ENCODE measurements at regions of chr7 and their contacts with region 1.

Region 1: DNA sequence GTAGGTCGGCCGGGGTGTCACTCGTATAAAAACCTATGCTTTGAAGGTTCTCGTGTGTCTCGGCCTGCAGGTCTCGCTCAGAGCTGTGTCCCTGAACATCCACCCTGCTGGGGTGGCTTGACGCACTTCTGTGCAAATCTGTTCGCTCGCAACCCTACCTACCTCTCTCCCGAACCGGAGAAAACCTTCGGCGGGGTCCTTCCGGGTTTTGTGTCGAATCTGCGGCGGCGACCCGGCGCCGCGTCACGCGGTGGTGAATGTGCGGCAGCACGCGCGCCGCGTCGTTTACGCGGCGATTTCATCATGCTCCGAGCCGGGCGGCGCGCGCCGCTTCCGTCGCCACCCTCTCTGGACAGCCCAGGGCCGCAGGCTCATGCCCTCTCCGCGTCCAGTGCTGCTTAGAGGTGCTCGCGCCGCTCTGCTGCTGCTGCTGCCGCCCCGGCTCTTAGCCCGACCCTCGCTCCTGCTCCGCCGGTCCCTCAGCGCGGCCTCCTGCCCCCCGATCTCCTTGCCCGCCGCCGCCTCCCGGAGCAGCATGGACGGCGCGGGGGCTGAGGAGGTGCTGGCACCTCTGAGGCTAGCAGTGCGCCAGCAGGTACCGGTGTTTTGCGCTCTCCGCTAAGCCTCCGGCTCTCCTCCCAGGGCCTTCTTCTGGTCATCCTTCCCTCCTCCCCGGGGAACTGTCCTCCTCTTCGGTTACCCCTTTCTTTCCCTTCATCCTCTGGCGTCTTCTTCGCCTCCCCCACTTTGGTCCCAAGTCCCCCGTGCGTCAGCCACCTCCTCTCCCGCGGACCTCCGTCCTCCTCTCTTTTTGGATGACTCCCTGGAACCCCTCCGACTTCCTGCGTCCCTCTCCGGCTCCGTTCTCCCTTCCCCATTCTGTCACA is at the start of gene GARS1:
- DNase-seq: peak; percentile 92
- ATAC-seq: peak; percentile 89
- H3K4me3 ChIP-seq: peak within 1 kb of the TSS; percentile 72
- H3K27ac ChIP-seq: peak within 1 kb of the TSS; percentile 90
- H3K4me1 ChIP-seq: peaks cover 5% of the 10 kb centered on the region
- H3K27me3 ChIP-seq: no peaks in the 10 kb centered on the region
- CTCF ChIP-seq: no peak
- POLR2A ChIP-seq: peak; percentile 94
- RAD21 ChIP-seq: no peak
- total RNA-seq, gene GARS1: 105 and 209 TPM in 2 replicates

Region 2: DNA sequence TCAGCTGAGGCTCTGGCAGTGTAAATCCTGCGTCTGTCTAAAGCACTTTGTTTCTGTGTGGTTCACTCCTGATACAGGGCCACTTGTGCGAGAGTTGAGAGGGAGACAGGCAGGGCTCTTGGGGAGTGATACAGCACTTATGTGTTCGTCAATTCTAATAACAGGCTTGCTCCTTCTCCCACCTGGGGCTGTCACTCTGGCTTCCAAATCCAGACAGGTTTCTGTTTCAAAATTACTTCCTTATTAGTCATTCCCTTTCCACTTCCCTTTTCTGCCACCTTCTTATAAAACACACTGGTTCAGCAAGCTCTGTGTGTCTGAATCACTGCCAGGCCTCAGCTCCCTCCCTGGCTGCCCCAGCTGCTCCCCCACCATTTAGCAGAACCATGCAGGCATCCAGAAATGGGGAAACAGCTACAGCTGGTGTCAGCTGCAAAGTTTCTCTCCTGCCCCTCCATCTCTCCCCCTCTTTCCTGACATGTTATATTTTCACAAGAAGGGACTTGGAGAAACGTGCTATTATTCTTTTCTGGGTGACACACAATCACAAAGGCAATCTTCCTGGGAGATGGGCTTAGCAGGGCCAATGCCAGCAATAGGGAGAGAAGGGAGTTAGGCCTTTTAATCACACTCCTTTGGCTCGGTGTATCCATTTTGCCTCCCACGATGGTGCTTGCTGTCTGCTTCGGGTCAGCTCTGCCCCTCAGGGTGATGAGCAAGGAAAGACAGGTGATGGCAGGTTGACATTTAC is 368.8 kb before region 1 on chr7:
- CTCF ChIA-PET with region 1: no interaction called
- POLR2A ChIA-PET with region 1: no interaction called
- dilution Hi-C with region 1: no loop called
- in situ Hi-C with region 1: no loop called
- intact Hi-C with region 1: no loop called
- DNase-seq: peak; percentile 8
- ATAC-seq: peak; percentile 61
- H3K4me3 ChIP-seq: no peak overlapping the region
- H3K27ac ChIP-seq: no peak overlapping the region
- H3K4me1 ChIP-seq: no peaks in the 10 kb centered on the region; the same call in 1 of the 2 replicates
- H3K27me3 ChIP-seq: peaks cover 2% of the 10 kb centered on the region
- CTCF ChIP-seq: no peak
- POLR2A ChIP-seq: no peak
- RAD21 ChIP-seq: no peak

Region 3: GRCh38 chr7:30630986-30631385 is 36.2 kb after region 1 on chr7:
- CTCF ChIA-PET with region 1: no interaction called
- POLR2A ChIA-PET with region 1: no interaction called
- dilution Hi-C with region 1: no loop called
- in situ Hi-C with region 1: no loop called
- intact Hi-C with region 1: loop called (anchors 5 kb)
- DNase-seq: no peak
- ATAC-seq: no peak
- H3K4me3 ChIP-seq: no peak overlapping the region
- H3K27ac ChIP-seq: no peak overlapping the region
- H3K4me1 ChIP-seq: no peaks in the 10 kb centered on the region
- H3K27me3 ChIP-seq: no peaks in the 10 kb centered on the region
- CTCF ChIP-seq: no peak
- POLR2A ChIP-seq: no peak
- RAD21 ChIP-seq: no peak

Measured in IMR-90 (cell line).